ENCODE measurements at regions of chr18 and their contacts with region 1.

Region 1: DNA sequence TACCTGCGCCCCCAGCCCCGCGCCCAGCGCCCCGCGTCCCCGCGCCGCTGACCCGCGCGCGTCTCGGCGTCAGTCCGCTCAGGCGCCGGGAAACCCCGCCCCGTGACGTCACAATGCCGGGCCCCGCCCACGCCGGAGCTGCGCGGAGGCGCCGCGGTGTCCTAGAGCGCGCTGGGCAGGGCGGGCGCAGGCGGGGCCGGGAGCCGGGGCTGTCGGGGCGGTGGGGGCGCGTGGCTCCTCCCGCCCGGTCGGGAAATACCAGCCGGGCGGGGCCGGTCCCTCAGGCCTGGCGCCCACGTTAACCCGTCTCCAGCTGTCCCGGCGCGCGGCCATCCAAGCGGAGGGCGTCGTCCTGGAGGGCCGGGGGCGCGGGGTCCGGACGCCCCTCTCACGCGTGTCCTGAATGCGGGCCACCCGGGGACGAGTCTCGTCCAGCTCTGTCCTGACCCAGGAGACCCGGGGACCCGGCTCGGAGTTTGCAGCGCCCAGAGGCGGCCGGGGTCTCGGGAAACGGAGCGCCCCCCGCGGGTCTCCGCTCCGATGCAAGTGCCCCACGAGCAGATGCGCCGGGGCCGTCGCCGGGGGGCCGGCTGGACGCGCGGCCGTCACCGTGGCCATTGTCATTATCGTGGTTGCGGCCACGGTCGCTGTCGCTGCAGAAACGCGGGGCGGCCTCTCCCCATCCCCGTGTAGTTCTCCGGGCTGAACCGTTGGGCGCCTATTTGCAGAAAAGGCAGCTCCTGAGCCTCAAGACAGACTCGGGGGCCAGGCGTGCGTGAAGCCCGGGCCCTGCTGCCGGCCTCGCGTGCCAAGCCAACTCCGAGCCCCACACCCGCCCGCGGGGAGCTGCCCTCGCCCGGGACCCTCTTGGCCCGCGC is at the start of gene SLC66A2:
- DNase-seq: peak; percentile 94 to 97
- H3K4me3 ChIP-seq: peak within 1 kb of the TSS; percentile 82 to 99 (median 94)
- H3K27ac ChIP-seq: peak within 1 kb of the TSS; percentile 74 to 93 (median 91)
- H3K4me1 ChIP-seq: peaks cover 26 to 53% (median 47%) of the 10 kb centered on the region in 4 donors
- H3K27me3 ChIP-seq: no peaks in the 10 kb centered on the region
- CTCF ChIP-seq: no peak
- EP300 ChIP-seq: no peak
- POLR2A ChIP-seq: no peak
- total RNA-seq, gene SLC66A2: 18.1 to 148 (median 25.5) TPM

Region 2: DNA sequence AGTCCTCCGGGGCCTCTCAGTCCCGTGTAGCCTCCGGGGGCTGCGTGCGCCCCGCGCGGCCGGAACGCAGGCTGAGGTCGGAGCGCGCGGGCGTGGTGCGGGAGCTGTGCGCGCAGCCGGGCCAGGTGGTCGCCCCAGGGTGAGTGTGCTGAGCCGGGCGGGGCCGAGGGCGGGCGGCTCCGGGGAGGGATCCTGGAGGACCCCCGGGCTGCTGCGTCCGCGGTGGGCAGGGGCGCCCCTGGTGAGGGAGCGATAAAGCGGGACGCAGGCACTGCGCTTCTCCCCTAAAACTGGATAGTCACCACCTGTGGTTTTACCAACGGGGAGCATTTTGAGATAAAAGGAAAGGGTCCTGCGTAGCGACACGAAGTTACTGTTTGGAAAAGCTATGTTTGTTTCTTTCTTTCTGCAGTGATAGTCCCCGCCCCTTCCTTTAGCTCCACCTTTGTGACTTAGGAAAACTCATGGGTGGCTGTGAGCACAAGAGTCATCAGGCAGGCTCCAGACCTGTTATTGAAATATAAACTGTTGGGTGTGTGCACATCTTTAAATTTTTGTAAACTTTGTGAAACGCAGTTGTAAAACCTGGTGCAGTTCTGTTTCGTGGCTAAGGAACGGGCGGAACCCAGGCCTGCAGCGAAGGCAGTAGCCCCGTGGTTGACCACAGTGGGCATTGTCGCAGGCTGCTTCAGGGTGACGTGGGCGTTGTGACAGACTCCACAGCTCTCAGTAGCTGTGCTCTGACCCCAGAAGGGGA is 271.5 kb before region 1 on chr18:
- intact Hi-C with region 1: loop called (anchors 10 kb)
- DNase-seq: peak; percentile 39 to 81
- H3K4me3 ChIP-seq: peak overlapping the region; percentile 93 to 99 (median 96)
- H3K27ac ChIP-seq: peak overlapping the region; percentile 93 to 100 (median 99)
- H3K4me1 ChIP-seq: peaks cover 28 to 72% (median 61%) of the 10 kb centered on the region in 4 donors
- H3K27me3 ChIP-seq: no peaks in the 10 kb centered on the region
- CTCF ChIP-seq: no peak
- EP300 ChIP-seq: no peak
- POLR2A ChIP-seq: no peak

Measured in stomach (tissue), 19 donors.